Left colon (tissue), 2 donors: ENCODE measurements at regions of chr9 and their contacts with region 1.

Region 1: DNA sequence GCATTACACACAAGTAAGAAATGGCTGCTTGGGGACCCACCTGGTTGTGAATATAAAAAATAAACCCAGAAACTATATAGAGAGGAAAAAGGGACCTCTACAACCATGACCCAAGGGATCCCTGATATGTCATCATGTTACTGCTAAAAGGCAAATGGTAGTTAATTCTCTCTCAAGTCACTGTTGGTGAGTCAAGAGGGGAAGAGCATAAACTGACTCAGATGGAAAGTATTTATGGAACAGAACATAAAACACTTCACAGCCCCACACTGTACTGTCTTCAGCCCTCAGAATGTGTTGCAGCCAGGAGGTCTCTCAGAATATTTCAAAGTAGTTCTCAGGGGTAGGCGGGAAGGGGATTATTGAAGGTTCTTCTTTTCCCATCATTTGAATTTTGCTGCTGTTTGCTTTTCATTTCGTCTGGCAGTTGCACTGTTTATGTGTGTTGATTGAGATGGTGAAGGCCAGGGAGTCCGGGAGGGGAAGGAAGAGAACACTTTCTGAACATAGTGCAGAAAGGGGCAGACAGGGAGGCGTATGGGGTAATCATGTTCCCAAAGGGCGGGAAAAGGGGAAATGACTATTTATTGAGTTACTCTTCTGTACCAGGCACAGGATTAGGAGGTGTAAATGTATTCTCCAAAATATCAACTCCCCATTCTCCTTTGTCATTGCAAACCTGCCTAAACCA is 85.5 kb downstream of the TEK start:
- DNase-seq: no peak
- ATAC-seq: peak; percentile 53

Region 2: GRCh38 chr9:27047136-27047535 is 147.4 kb before region 1 on chr9:
- intact Hi-C with region 1: loop called in 1 of 2 experiments (anchors 10 kb)
- DNase-seq: no peak
- ATAC-seq: no peak

Region 3: GRCh38 chr9:27353474-27354229 is 159.1 kb after region 1 on chr9:
- intact Hi-C with region 1: no loop called
- DNase-seq: no peak
- ATAC-seq: peak; percentile 35